Activated CD4-positive, alpha-beta memory T cell treated with anti-CD3 and anti-CD28 coated beads for 36 hours (primary cell): ENCODE measurements at regions of chr1 and their contacts with region 1.

Region 1: DNA sequence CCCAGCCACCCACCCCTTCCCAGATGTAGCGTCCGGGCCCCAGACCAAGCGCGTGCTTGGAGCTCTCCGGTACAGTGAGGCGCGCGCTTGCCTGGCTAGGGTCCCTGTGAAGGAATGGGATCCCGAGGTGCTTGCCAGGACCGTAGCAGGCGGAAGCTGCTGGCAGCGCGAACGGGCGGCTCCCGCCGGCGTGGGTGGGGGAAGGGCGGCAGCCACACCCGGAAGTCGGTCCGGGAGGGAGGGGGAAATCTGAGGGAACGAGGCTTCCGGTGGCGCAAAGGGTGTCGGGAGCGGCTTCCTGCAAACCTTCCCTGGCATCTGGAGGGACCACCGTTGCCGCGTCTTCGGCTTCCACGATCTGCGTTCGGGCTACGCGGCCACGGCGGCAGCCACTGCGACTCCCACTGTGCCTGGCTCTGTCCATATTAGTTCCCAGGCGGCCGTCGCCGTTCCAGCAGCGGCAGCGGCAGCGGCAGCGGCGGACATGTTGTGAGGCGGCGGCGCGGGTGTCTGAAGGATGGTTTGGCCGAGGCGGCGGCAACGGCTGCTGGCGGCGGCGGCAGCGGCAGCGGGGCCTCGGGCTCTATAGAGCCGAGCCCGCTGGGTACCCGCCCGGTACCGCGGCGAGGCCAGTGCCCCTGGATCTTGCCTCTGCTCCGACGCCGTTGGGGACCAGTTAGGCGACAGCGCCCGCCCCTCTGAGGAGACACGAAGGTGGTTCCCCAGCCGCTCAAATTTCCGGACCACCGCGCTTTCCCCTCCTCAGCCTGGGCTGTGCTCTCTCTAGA is at the start of gene DR1:
- DNase-seq: peak; percentile 95
- H3K4me3 Mint-ChIP-seq: peak within 1 kb of the TSS; percentile 94
- H3K27ac Mint-ChIP-seq: peak within 1 kb of the TSS; percentile 98
- H3K4me1 Mint-ChIP-seq: peaks cover 22% of the 10 kb centered on the region
- H3K27me3 Mint-ChIP-seq: no peaks in the 10 kb centered on the region
- total RNA-seq, gene DR1: 74.9 to 77.4 TPM

Region 2: GRCh38 chr1:92960395-92961130 is 385.3 kb before region 1 on chr1:
- CTCF ChIA-PET with region 1: no interaction called
- POLR2A ChIA-PET with region 1: no interaction called
- intact Hi-C with region 1: loop called (anchors 5 kb)
- DNase-seq: peak; percentile 75
- H3K4me3 Mint-ChIP-seq: peak overlapping the region; percentile 88
- H3K27ac Mint-ChIP-seq: peak overlapping the region; percentile 96
- H3K4me1 Mint-ChIP-seq: peaks cover 39% of the 10 kb centered on the region
- H3K27me3 Mint-ChIP-seq: no peaks in the 10 kb centered on the region

Region 3: DNA sequence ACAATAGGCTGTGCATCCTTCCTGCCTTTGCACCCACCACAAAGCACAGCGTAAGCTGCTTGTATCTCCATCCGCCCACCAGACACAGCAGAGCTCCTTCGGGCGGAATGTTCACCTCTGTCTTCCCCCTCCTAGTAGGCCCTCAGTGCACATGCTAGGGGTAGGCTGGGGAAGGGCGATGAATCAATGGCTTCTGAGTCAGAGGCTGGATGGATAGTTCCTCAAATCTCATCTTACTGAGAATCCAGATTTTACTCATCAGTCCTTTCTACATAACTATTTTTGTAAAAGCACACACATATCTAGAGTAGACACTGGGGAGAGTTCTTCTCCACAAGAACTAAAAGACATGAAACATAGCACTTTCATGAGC is 262.0 kb after region 1 on chr1:
- CTCF ChIA-PET with region 1: no interaction called
- POLR2A ChIA-PET with region 1: interaction called, 4 read pairs
- intact Hi-C with region 1: loop called (anchors 2 kb)
- DNase-seq: peak; percentile 85
- H3K4me3 Mint-ChIP-seq: no peak overlapping the region
- H3K27ac Mint-ChIP-seq: peak overlapping the region; percentile 43
- H3K4me1 Mint-ChIP-seq: peaks cover 39% of the 10 kb centered on the region
- H3K27me3 Mint-ChIP-seq: peaks cover 21% of the 10 kb centered on the region

Region 4: GRCh38 chr1:93878889-93879586 is 533.2 kb after region 1 on chr1 and contains the start of gene DNTTIP2:
- CTCF ChIA-PET with region 1: no interaction called
- POLR2A ChIA-PET with region 1: interaction called, 9 read pairs
- intact Hi-C with region 1: loop called (anchors 1 kb)
- DNase-seq: peak; percentile 94
- H3K4me3 Mint-ChIP-seq: peak within 1 kb of the TSS; percentile 94
- H3K27ac Mint-ChIP-seq: peak within 1 kb of the TSS; percentile 98
- H3K4me1 Mint-ChIP-seq: peaks cover 42% of the 10 kb centered on the region
- H3K27me3 Mint-ChIP-seq: no peaks in the 10 kb centered on the region
- total RNA-seq, gene DNTTIP2: 84.4 to 91.1 TPM

Region 5: DNA sequence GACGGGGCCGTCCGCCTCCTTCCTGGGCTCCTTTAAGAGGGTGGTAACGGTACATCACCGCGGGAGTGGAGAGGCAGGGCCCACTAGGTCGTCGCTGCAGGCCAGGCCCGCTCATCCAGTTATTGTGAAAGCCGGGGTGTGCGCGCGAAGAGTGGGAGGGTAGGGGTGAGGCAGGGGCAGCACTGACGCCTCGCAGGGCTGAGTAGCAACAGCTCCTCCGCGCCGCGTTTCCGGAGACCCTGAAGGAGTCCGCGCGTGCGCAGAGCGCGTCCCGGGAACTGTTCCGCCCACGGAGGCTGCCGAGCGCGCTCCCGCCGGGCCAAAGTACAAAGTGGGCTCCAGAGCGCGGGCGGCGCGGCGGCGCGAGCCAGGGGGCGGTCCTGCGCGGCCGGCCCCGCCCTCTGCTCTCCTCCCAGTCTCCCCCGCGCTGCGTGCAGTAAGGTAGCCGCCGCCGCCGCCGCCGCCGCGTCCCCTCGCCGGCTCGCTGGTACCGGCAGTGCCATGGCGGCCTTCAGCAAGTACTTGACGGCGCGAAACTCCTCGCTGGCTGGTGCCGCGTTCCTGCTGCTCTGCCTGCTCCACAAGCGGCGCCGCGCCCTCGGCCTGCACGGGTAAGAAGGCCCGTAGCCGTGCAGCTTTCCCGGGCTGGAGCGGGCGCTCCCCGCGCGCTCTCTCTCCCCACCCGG is 1072.3 kb after region 1 on chr1 and contains the start of gene ABCD3:
- CTCF ChIA-PET with region 1: no interaction called
- POLR2A ChIA-PET with region 1: no interaction called
- intact Hi-C with region 1: loop called (anchors 5 kb)
- DNase-seq: peak; percentile 98
- H3K4me3 Mint-ChIP-seq: no peak within 1 kb of the TSS
- H3K27ac Mint-ChIP-seq: peak within 1 kb of the TSS; percentile 55
- H3K4me1 Mint-ChIP-seq: peaks cover 35% of the 10 kb centered on the region
- H3K27me3 Mint-ChIP-seq: peaks cover 2% of the 10 kb centered on the region
- total RNA-seq, gene ABCD3: 33.7 to 34.0 TPM